ENCODE measurements at regions of chr10 and their contacts with region 1.

Region 1: GRCh38 chr10:89207181-89207800 is at the start of gene CH25H:
- DNase-seq: peak; percentile 56 to 66 (median 63)
- ATAC-seq: peak; percentile 71
- H3K4me3 ChIP-seq: no peak within 1 kb of the TSS
- H3K27ac ChIP-seq: peak within 1 kb of the TSS in 3 of 4 donors; percentile 11 to 49 (median 14)
- H3K4me1 ChIP-seq: peaks cover 22% of the 10 kb centered on the region
- H3K27me3 ChIP-seq: peaks cover 0 to 10% of the 10 kb centered on the region in 2 donors
- CTCF ChIP-seq: no peak
- POLR2A ChIP-seq: peak in 2 of 3 donors; percentile 14 to 17
- total RNA-seq, gene CH25H: 1.0 to 2.0 TPM

Region 2: GRCh38 chr10:89029785-89030437 is 177.4 kb before region 1 on chr10:
- intact Hi-C with region 1: loop called (anchors 10 kb)
- DNase-seq: peak; percentile 74 to 81 (median 76)
- ATAC-seq: peak; percentile 71
- H3K4me3 ChIP-seq: no peak overlapping the region
- H3K27ac ChIP-seq: no peak overlapping the region
- H3K4me1 ChIP-seq: peaks cover 6% of the 10 kb centered on the region
- H3K27me3 ChIP-seq: no peaks in the 10 kb centered on the region
- CTCF ChIP-seq: peak; percentile 62 to 88 (median 84)
- POLR2A ChIP-seq: no peak

Region 3: GRCh38 chr10:89042562-89042961 is 164.7 kb before region 1 on chr10:
- intact Hi-C with region 1: loop called (anchors 5 kb)
- DNase-seq: no peak
- ATAC-seq: no peak
- H3K4me3 ChIP-seq: no peak overlapping the region
- H3K27ac ChIP-seq: no peak overlapping the region
- H3K4me1 ChIP-seq: no peaks in the 10 kb centered on the region
- H3K27me3 ChIP-seq: no peaks in the 10 kb centered on the region
- CTCF ChIP-seq: no peak
- POLR2A ChIP-seq: no peak

Region 4: GRCh38 chr10:89115876-89116627 is 91.2 kb before region 1 on chr10:
- intact Hi-C with region 1: no loop called
- DNase-seq: no peak
- ATAC-seq: no peak
- H3K4me3 ChIP-seq: no peak overlapping the region
- H3K27ac ChIP-seq: no peak overlapping the region
- H3K4me1 ChIP-seq: no peaks in the 10 kb centered on the region
- H3K27me3 ChIP-seq: no peaks in the 10 kb centered on the region
- CTCF ChIP-seq: no peak
- POLR2A ChIP-seq: no peak

Region 5: GRCh38 chr10:89363729-89364442 is 156.6 kb after region 1 on chr10:
- intact Hi-C with region 1: no loop called
- DNase-seq: no peak
- ATAC-seq: no peak
- H3K4me3 ChIP-seq: no peak overlapping the region
- H3K27ac ChIP-seq: no peak overlapping the region
- H3K4me1 ChIP-seq: peaks cover 8% of the 10 kb centered on the region
- H3K27me3 ChIP-seq: no peaks in the 10 kb centered on the region
- CTCF ChIP-seq: no peak
- POLR2A ChIP-seq: no peak